ENCODE measurements at regions of chr1 and their contacts with region 1.

Region 1: GRCh38 chr1:27341525-27342252 is at the start of gene SYTL1:
- H3K4me3 ChIP-seq: peak within 1 kb of the TSS; percentile 43
- H3K27ac ChIP-seq: no peak within 1 kb of the TSS; the same call in 1 of the 2 replicates
- H3K4me1 ChIP-seq: peaks cover 3% of the 10 kb centered on the region; the same call in 1 of the 2 replicates
- CTCF ChIP-seq: peak; percentile 32; the same call in 1 of the 2 replicates

Region 2: GRCh38 chr1:27192039-27192529 is 149.6 kb before region 1 on chr1:
- CTCF ChIA-PET with region 1: no interaction called
- POLR2A ChIA-PET with region 1: no interaction called
- H3K4me3 ChIP-seq: no peak overlapping the region
- H3K27ac ChIP-seq: no peak overlapping the region
- H3K4me1 ChIP-seq: no peaks in the 10 kb centered on the region
- CTCF ChIP-seq: no peak

Region 3: DNA sequence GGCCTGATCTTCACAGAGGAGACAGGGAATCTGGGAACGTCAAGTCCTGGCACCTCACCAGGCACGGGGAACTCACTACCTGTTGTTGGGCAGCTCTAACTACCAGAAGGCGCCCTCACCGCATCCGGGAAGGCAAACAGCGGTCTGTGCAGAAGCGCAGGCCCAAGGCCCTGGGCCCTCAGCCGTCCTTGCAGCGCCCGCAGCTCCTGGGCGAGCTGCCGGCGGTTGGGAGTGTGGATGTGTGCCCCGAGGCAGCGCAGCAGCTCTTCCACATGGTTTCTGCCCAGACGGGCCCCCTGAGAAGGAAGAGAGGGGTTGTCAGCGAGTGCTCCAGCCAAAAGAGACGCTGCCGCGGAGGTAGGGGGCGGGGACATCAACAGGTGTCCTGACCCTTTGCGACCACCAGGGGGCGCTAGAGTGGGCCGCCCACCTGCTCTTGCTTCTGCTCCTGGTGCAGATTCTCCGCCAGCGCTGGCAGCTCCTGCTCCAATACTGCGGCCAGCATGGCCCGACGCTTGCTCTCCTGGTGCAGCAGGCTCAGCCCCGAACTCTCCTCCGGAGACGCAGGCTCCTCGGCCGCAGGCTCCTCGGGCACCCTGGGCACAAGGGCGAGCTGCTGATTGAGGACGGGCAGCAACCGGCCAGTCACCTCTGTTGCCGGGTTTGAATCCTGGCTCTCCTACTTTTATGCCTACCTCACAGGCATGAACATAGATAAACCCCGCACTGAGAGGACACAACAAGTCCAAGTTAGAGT is 15.8 kb after region 1 on chr1:
- CTCF ChIA-PET with region 1: interaction called, 34 read pairs
- POLR2A ChIA-PET with region 1: interaction called, 7 read pairs
- H3K4me3 ChIP-seq: no peak overlapping the region
- H3K27ac ChIP-seq: no peak overlapping the region
- H3K4me1 ChIP-seq: no peaks in the 10 kb centered on the region
- CTCF ChIP-seq: peak; percentile 94

Measured in HEK293 (cell line).